K562 (cell line): ENCODE measurements at regions of chr17 and their contacts with region 1.

Region 1: DNA sequence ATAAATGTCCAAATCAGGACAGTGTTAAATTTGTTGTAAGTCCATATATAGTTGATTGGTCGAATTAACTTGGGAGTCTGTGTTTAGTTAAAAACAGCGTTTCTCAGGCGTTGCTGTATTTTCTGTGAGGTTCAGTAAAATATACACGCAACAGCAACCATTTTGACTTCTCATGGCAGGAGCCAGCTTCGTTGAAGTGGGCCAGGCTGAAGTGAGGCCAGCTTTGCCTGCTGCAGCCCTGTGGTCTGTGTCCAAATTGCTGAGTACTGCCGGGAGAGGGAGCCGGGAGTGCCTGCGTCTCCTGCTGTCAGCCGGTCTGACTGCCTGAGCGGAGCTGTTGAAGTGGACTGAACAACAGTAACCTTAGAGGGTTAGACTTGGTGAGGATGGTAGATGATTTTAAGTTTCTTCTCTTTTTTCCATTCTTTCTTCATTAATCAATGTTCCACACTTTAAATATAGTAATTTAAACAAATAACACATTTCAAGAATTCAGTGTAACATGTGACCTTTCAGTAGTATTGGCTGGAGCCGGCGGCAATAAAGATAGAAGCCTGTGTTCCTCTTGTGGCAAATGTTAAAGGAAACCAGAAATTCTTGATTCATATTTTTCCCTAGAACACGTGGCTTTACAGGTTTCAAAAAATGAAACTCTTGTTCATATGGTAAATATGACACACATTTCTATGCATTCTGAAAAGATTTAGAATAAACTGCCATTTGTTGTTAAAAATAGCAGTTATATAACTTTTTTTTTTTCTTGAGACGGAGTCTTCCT is 37.0 kb upstream of the ZNF750 start:
- DNase-seq: peak; percentile 81 to 89 (median 84)
- ATAC-seq: peak; percentile 99
- H3K4me3 ChIP-seq: no peak overlapping the region
- H3K27ac ChIP-seq: peak overlapping the region; percentile 64
- H3K4me1 ChIP-seq: peaks cover 17 to 48% of the 10 kb centered on the region in 2 experiments; a peak in 4 of 5 replicates
- H3K27me3 ChIP-seq: no peaks in the 10 kb centered on the region
- CTCF ChIP-seq: peak; percentile 72 to 83 (median 75)
- EP300 ChIP-seq: no peak
- POLR2A ChIP-seq: no peak
- RAD21 ChIP-seq: peak; percentile 68 to 76

Region 2: GRCh38 chr17:82863941-82864774 is 12.6 kb before region 1 on chr17:
- CTCF ChIA-PET with region 1: interaction called, 3 read pairs
- POLR2A ChIA-PET with region 1: interaction called, 12 read pairs
- in situ Hi-C with region 1: no loop called
- intact Hi-C with region 1: no loop called
- DNase-seq: peak; percentile 63 to 79 (median 71)
- ATAC-seq: peak; percentile 70
- H3K4me3 ChIP-seq: no peak overlapping the region
- H3K27ac ChIP-seq: peak overlapping the region; percentile 71
- H3K4me1 ChIP-seq: peaks cover 52 to 87% of the 10 kb centered on the region in 2 experiments
- H3K27me3 ChIP-seq: no peaks in the 10 kb centered on the region
- CTCF ChIP-seq: no peak; a peak in 1 of 6 replicates
- EP300 ChIP-seq: no peak
- POLR2A ChIP-seq: no peak
- RAD21 ChIP-seq: no peak